Lower lobe of right lung (tissue), 2 donors: ENCODE measurements at regions of chr3 and their contacts with region 1.

Region 1: GRCh38 chr3:150495563-150496168 is 50.6 kb downstream of the SERP1 start:
- DNase-seq: no peak
- ATAC-seq: peak; percentile 51 to 67
- H3K4me3 ChIP-seq: no peak overlapping the region
- H3K27ac ChIP-seq: no peak overlapping the region
- H3K4me1 ChIP-seq: no peaks in the 10 kb centered on the region
- H3K27me3 ChIP-seq: no peaks in the 10 kb centered on the region
- CTCF ChIP-seq: peak; percentile 85

Region 2: DNA sequence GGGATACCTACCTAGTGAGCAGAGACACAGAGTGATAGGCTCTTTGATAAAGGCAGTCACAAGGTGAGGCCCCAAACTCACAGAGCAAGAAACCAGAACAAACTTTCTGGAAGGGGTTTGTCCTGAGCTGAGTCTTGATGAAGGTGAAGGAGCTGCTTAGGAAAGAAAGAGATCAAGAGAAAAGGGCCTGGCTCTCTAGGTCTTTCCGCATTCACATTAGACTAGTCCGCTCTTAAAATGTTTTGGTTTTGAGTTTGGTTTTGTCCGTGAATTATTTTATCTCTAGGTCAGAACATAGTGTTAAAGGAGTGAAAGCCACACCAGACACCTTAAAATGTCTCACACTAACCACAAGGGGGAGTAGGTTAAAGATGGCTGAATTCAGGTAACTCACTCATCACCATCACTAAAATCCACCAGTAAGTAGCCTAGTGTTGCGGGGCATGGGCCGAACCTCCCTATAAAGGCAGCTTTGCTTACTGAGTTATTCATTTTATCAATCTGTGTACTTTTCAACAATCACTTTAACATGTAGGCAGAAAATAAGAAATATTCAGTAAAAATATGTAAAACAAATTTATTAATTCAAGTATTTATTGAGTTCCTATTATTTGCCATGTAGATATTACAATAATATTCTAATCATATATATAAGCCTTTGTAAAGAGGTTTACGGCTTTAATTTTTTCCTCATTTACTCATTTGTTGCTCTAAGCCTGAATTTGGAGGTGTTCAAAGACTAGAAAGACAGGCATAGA is 209.1 kb before region 1 on chr3:
- intact Hi-C with region 1: loop called (anchors 10 kb)
- DNase-seq: no peak
- ATAC-seq: peak; percentile 85 to 93
- H3K4me3 ChIP-seq: no peak overlapping the region
- H3K27ac ChIP-seq: no peak overlapping the region
- H3K4me1 ChIP-seq: no peaks in the 10 kb centered on the region
- H3K27me3 ChIP-seq: no peaks in the 10 kb centered on the region
- CTCF ChIP-seq: peak; percentile 56

Region 3: DNA sequence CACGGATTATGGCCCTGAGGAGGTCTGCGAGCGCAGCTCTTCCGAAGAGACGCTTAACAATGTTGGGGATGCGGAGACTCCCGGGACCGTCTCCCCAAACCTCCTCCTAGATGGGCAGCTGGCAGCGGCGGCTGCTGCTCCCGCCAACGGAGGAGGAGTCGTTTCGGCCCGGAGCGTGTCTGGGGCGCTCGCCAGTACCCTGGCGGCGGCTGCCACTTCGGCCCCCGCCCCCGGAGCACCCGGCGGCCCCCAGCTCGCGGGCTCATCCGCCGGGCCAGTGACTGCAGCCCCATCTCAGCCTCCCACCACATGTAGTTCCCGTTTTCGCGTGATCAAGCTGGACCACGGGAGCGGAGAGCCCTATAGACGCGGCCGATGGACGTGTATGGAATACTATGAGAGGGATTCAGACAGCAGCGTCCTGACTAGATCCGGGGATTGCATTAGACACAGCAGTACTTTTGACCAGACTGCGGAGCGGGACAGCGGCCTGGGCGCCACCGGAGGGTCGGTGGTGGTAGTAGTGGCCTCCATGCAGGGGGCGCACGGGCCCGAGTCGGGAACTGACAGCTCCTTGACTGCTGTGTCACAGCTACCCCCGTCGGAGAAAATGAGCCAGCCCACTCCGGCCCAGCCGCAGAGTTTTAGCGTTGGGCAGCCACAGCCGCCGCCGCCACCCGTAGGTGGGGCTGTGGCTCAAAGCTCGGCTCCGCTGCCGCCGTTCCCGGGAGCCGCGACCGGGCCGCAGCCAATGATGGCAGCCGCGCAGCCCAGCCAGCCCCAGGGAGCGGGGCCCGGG is 86.0 kb before region 1 on chr3:
- intact Hi-C with region 1: loop called (anchors 10 kb)
- DNase-seq: peak; percentile 86
- ATAC-seq: peak; percentile 65 to 77
- H3K4me3 ChIP-seq: peak overlapping the region; percentile 88
- H3K27ac ChIP-seq: peak overlapping the region; percentile 99
- H3K4me1 ChIP-seq: peaks cover 30% of the 10 kb centered on the region
- H3K27me3 ChIP-seq: no peaks in the 10 kb centered on the region
- CTCF ChIP-seq: peak; percentile 63